ENCODE measurements at regions of chr6 and their contacts with region 1.

Region 1: DNA sequence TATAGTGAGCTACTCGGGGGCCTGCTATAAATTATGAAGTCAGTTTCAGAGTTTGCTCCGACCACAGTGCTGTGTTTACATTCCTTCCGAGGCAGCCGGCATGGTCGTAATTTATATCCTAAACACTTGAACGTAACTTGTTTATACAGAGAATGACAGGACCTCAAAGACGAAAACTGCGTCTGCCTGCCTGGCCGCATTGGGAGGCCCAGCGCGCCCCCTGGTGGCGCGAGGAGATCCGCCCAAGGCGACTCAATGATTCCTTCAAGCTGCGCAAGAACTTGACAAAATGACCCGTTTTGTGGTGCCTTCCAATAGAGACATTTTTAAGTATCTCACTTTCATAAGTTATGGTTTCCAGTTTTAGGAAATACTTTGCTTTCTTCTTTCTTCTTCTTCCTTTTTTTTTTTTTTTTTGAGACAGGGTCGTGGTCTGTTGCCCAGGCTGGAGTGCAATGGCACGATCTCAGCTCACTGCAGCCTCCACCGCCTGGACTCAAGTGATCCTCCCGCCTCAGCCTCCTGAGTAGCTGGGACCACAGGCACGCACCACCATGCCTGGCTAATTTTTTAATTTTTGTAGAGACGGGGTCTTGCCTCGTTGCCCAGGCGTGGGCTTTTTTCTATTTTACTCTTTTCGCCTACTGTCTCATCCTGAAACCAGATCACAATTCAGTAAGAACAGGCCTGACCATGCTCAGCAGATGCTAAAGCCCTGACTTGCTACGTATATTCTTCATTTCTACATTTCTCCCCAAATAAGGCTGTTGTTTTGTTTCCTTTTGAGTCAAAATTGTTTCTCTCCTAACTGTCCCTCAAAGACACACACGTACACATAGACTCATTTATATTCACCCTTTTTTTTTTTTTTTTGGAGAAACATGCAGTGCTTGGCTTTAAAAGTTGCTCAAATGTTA is 7.8 kb downstream of the FOXF2 start:
- DNase-seq: peak; percentile 75
- ATAC-seq: peak; percentile 63
- H3K4me3 Mint-ChIP-seq: no peak overlapping the region
- H3K27ac Mint-ChIP-seq: no peak overlapping the region
- H3K4me1 Mint-ChIP-seq: peaks cover 8% of the 10 kb centered on the region
- H3K27me3 Mint-ChIP-seq: peaks cover 58% of the 10 kb centered on the region

Region 2: GRCh38 chr6:1378065-1379016 is 18.9 kb before region 1 on chr6:
- CTCF ChIA-PET with region 1: interaction called, 10 read pairs
- DNase-seq: no peak
- ATAC-seq: no peak
- H3K4me3 Mint-ChIP-seq: no peak overlapping the region
- H3K27ac Mint-ChIP-seq: peak overlapping the region; percentile 28
- H3K4me1 Mint-ChIP-seq: peaks cover 19% of the 10 kb centered on the region
- H3K27me3 Mint-ChIP-seq: peaks cover 81% of the 10 kb centered on the region

Region 3: DNA sequence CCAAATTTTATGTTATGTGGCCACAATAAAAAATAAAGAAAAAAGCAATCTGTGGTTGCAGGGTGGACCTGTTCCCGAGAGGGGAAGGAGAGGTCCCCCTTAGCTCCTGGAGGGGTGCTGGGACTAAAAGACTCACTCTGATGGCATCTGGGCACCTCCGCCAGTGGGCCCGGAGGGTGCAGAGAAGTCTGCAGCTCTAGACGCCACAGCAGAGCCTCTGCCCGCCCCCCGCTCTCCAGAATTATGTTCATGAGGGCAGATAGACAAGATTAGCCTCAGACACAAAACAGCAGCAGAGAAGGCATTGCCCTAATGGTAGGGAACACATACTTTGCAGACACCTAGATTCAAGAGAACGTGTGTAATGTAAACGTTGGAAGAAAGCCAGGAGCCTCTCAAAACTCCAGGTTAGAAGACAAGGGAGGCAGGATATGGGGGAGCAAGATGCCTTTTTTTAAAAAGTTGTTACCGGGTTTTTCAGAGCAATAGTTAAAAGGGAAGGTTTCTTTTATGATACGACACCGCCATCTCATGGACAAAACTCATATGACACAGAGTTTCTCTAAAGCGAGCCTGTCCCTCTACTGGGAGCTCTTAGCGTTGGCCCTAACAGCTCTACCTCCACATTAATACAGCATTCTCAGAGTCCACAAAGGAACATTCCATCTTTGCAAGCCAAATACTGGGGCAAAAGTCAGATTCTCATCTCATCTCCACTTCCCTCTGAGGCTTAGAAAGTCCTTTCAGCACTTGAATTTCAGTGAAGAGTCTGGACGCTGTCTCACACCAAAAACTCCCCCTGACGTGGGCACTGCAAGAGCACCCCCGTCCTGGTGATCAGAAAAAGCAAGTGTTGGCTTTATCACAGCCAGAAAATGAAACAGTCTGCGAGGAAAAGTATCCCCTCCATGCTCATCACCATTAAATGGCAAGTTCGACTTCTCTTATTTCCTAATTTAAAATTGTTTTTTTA is 39.4 kb after region 1 on chr6:
- CTCF ChIA-PET with region 1: interaction called, 15 read pairs
- DNase-seq: peak; percentile 50
- ATAC-seq: peak; percentile 67
- H3K4me3 Mint-ChIP-seq: no peak overlapping the region
- H3K27ac Mint-ChIP-seq: no peak overlapping the region
- H3K4me1 Mint-ChIP-seq: no peaks in the 10 kb centered on the region
- H3K27me3 Mint-ChIP-seq: peaks cover 43% of the 10 kb centered on the region